ENCODE measurements at regions of chr18 and their contacts with region 1.

Region 1: GRCh38 chr18:35005963-35006577 is 35.1 kb upstream of the MAPRE2 start:
- DNase-seq: no peak
- ATAC-seq: peak; percentile 84 to 94
- H3K4me3 ChIP-seq: no peak overlapping the region
- H3K27ac ChIP-seq: no peak overlapping the region
- H3K4me1 ChIP-seq: no peaks in the 10 kb centered on the region
- H3K27me3 ChIP-seq: no peaks in the 10 kb centered on the region
- CTCF ChIP-seq: peak; percentile 64

Region 2: GRCh38 chr18:35143622-35144596 is 137.8 kb after region 1 on chr18:
- intact Hi-C with region 1: loop called (anchors 5 kb)
- DNase-seq: no peak
- ATAC-seq: peak; percentile 87 to 97
- H3K4me3 ChIP-seq: no peak overlapping the region
- H3K27ac ChIP-seq: no peak overlapping the region
- H3K4me1 ChIP-seq: no peaks in the 10 kb centered on the region
- H3K27me3 ChIP-seq: no peaks in the 10 kb centered on the region
- CTCF ChIP-seq: peak; percentile 75

Measured in lower lobe of right lung (tissue), 2 donors.